Naive thymus-derived CD4-positive, alpha-beta T cell (primary cell): ENCODE measurements at regions of chr11 and their contacts with region 1.

Region 1: GRCh38 chr11:9203691-9204311 is 61.3 kb downstream of the DENND5A start:
- DNase-seq: peak in 7 of 9 donors; percentile 13 to 50 (median 24)
- ATAC-seq: peak; percentile 61
- H3K4me3 ChIP-seq: no peak overlapping the region
- H3K4me3 Mint-ChIP-seq: no peak overlapping the region
- H3K27ac ChIP-seq: no peak overlapping the region
- H3K27ac Mint-ChIP-seq: peak overlapping the region in 2 of 9 donors; percentile 9 to 50
- H3K4me1 ChIP-seq: no peaks in the 10 kb centered on the region
- H3K4me1 Mint-ChIP-seq: peaks cover 15 to 55% (median 26%) of the 10 kb centered on the region in 7 donors
- H3K27me3 ChIP-seq: no peaks in the 10 kb centered on the region
- H3K27me3 Mint-ChIP-seq: no peaks in the 10 kb centered on the region

Region 2: DNA sequence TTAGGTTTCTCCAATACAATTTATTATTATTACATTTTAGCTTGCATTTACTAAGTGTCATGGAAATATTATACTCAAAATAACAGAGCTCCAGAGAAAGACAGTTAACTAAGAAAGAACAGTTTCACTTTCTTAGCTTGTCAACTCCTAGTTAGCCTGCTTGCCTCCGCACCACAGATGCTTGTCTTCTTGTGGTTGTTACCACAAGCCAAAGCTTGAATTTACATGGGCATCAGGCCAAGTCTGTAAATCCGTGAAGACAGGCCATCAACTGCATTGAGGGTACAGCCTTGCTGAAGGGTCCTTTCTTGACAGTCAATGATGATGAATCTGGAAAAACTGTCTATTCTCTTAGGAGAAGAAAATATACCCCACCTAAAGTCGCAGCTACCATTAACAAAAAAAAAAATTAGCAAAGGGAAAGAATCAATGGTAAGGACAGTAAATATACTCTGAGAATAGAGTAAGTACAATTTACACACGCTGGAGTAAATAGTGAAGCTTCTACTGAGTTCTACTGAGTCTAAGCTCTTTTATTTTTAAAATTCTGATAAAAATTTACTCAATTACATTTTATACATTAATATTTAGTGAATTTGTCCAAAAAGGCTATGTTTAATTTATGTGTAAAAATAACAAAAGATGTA is 77.0 kb after region 1 on chr11:
- CTCF ChIA-PET with region 1: interaction called, 3 read pairs
- POLR2A ChIA-PET with region 1: interaction called, 3 read pairs
- intact Hi-C with region 1: loop called in 1 of 2 experiments (anchors 2 kb)
- DNase-seq: peak in 8 of 9 donors; percentile 59 to 80 (median 72)
- ATAC-seq: peak; percentile 95
- H3K4me3 ChIP-seq: peak overlapping the region; percentile 37
- H3K4me3 Mint-ChIP-seq: peak overlapping the region; percentile 35 to 79 (median 77)
- H3K27ac ChIP-seq: peak overlapping the region; percentile 55
- H3K27ac Mint-ChIP-seq: peak overlapping the region; percentile 72 to 94 (median 82)
- H3K4me1 ChIP-seq: peaks cover 11 to 14% of the 10 kb centered on the region in 2 donors
- H3K4me1 Mint-ChIP-seq: peaks cover 11 to 36% (median 17%) of the 10 kb centered on the region in 7 donors
- H3K27me3 ChIP-seq: no peaks in the 10 kb centered on the region
- H3K27me3 Mint-ChIP-seq: no peaks in the 10 kb centered on the region

Region 3: GRCh38 chr11:9285850-9286587 is 82.2 kb after region 1 on chr11:
- CTCF ChIA-PET with region 1: interaction called, 3 read pairs
- POLR2A ChIA-PET with region 1: interaction called, 3 read pairs
- intact Hi-C with region 1: loop called in 1 of 2 experiments (anchors 1 kb)
- DNase-seq: no peak
- ATAC-seq: no peak
- H3K4me3 ChIP-seq: no peak overlapping the region
- H3K4me3 Mint-ChIP-seq: no peak overlapping the region
- H3K27ac ChIP-seq: no peak overlapping the region
- H3K27ac Mint-ChIP-seq: no peak overlapping the region
- H3K4me1 ChIP-seq: peaks cover 0 to 2% of the 10 kb centered on the region in 2 donors
- H3K4me1 Mint-ChIP-seq: peaks cover 2 to 24% (median 17%) of the 10 kb centered on the region in 7 donors
- H3K27me3 ChIP-seq: no peaks in the 10 kb centered on the region
- H3K27me3 Mint-ChIP-seq: no peaks in the 10 kb centered on the region

Region 4: DNA sequence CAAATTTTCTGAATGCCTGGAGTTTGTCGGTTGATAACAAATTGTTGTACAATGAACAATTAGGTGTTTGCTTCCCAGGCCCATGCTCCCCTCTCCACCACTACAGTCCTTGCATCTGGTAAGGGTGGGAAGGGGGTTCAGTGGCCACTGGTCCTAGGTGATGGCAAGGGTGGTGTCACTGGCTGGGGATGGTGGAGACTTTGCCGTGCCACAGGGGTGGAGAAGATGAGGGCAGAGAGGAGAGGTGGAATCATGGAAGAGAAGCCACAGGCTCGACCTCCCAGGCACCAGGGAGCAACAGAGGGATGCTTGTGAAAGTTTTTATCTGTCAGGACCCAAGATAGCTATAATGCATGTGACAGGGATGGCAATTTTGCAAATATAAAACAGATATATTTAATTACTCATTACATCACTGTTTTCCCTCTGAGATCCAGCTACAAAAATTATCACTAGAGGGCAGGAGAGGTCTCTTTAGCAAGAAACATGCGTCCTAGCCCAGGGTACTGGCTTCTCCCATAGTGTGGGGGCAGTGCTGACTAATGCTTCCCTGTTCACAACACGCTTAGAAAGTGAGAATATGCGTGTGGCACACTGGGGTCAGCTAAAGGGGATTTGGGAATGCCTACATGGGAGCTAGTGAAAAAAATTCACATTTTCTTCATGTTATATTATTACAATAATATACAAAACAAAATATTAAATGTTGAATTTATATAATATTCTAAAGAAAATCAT is 1202.2 kb after region 1 on chr11:
- CTCF ChIA-PET with region 1: no interaction called
- POLR2A ChIA-PET with region 1: no interaction called
- intact Hi-C with region 1: no loop called
- DNase-seq: peak in 8 of 9 donors; percentile 30 to 56 (median 46)
- ATAC-seq: peak; percentile 82
- H3K4me3 ChIP-seq: no peak overlapping the region
- H3K4me3 Mint-ChIP-seq: no peak overlapping the region
- H3K27ac ChIP-seq: no peak overlapping the region
- H3K27ac Mint-ChIP-seq: peak overlapping the region in 1 of 9 donors; percentile 50
- H3K4me1 ChIP-seq: peaks cover 4 to 12% of the 10 kb centered on the region in 2 donors
- H3K4me1 Mint-ChIP-seq: peaks cover 5 to 34% (median 27%) of the 10 kb centered on the region in 7 donors
- H3K27me3 ChIP-seq: no peaks in the 10 kb centered on the region
- H3K27me3 Mint-ChIP-seq: peaks cover 0 to 2% (median 0%) of the 10 kb centered on the region in 5 donors